ENCODE measurements at regions of chr13 and their contacts with region 1.

Region 1: GRCh38 chr13:36858290-36858689 is 39.3 kb downstream of the RFXAP start:
- DNase-seq: peak; percentile 31
- ATAC-seq: peak; percentile 94
- H3K4me3 ChIP-seq: no peak overlapping the region
- H3K27ac ChIP-seq: no peak overlapping the region
- H3K4me1 ChIP-seq: peaks cover 0 to 8% of the 10 kb centered on the region in 2 experiments; a peak in 2 of 4 replicates
- H3K27me3 ChIP-seq: no peaks in the 10 kb centered on the region
- CTCF ChIP-seq: peak; percentile 30 to 54 (median 50); a peak in 5 of 6 replicates
- POLR2A ChIP-seq: no peak
- RAD21 ChIP-seq: peak; percentile 58

Region 2: DNA sequence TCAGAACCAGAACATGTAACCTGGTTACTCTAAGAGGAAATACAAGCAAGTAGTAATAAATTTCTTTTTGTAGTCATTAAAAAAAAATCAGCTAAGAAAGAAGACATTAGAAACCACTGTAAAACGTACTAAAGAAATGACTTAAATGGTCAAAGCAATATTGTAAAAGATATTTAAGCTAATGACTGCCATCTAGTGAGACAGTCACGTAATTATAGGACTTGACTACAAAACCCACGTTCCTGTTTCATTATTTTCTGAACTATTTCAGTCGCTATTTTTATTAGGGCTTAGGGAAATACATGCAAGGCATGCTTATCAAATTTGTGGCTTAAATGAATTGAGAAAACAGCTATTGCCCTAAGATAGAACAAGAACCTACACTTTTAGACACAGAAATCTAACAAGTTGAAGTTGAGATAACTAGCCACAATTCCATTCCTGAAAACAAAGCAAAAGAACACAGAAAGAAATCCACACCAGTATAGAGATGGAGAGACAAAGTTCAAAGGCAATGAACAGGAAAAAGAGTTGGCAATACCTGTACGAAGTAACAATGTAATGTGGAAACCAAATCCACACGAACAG is 123.0 kb after region 1 on chr13:
- CTCF ChIA-PET with region 1: interaction called, 25 read pairs
- POLR2A ChIA-PET with region 1: no interaction called
- RAD21 ChIA-PET with region 1: no interaction called
- intact Hi-C with region 1: loop called (anchors 1 kb)
- DNase-seq: no peak
- ATAC-seq: peak; percentile 54
- H3K4me3 ChIP-seq: no peak overlapping the region
- H3K27ac ChIP-seq: no peak overlapping the region
- H3K4me1 ChIP-seq: no peaks in the 10 kb centered on the region
- H3K27me3 ChIP-seq: no peaks in the 10 kb centered on the region
- CTCF ChIP-seq: peak; percentile 30 to 63 (median 37); a peak in 4 of 6 replicates
- POLR2A ChIP-seq: no peak
- RAD21 ChIP-seq: peak; percentile 51; the same call in 1 of the 2 replicates

Region 3: DNA sequence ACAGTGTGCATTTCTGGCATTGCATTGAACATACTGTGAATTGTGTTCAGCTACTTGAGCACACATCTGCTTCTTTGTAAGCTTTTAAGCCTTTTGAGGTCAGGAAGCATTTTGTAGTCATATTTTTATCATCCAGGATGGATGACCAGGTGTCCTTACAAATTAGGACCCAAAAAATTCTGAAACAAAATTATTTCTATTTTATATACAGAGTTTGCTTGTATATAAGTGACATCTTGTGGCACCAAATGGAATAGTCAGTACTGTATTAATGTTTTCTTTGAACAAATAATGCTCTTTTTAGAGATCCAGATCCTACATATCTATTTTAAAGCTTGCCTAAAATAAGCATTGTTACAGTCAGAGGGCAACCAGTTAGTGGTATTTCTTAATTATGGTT is 210.7 kb after region 1 on chr13:
- CTCF ChIA-PET with region 1: interaction called, 4 read pairs
- POLR2A ChIA-PET with region 1: no interaction called
- RAD21 ChIA-PET with region 1: no interaction called
- intact Hi-C with region 1: loop called (anchors 2 kb)
- DNase-seq: peak; percentile 0
- ATAC-seq: peak; percentile 59; the same call in 1 of the 2 replicates
- H3K4me3 ChIP-seq: no peak overlapping the region
- H3K27ac ChIP-seq: no peak overlapping the region
- H3K4me1 ChIP-seq: no peaks in the 10 kb centered on the region
- H3K27me3 ChIP-seq: no peaks in the 10 kb centered on the region
- CTCF ChIP-seq: peak; percentile 13 to 38 (median 26); a peak in 4 of 6 replicates
- POLR2A ChIP-seq: no peak
- RAD21 ChIP-seq: peak; percentile 54